ENCODE measurements at regions of chr20 and their contacts with region 1.

Region 1: DNA sequence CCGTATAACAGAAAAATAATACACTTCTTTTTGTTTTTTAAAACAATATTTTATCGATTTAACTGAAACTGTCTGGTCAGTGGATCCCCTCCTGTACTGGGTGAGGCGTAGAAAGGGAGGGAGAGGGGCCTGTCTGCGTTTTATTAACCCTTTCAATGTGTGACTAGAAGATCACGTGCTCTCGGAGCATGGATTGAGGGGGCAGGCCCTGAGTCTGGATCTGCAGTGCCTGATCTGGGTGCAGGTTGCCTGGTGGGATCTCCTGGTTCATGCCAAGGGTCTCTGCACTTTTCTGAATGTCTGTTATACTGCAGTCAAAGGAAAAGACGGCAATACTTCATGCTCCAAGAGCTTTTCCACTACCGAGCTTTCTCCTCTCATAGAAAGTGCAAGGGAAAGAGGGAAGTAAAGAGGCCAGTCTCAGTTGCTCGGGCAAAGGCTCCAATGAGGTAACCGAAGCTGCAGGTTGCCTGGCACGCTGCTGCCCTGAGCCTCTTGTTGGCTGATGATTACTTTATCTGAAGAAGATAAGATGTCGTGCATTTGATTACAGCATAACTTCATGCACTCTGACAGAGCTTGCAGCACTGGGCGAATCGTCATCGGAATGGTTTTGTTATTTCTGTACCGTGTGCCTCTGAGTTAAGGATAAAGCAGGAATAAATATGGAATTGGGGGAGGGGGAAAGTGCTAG is 167.5 kb upstream of the PMEPA1 start:
- DNase-seq: peak; percentile 3 to 53
- H3K4me3 ChIP-seq: no peak overlapping the region
- CTCF ChIP-seq: no peak
- POLR2A ChIP-seq: no peak

Region 2: DNA sequence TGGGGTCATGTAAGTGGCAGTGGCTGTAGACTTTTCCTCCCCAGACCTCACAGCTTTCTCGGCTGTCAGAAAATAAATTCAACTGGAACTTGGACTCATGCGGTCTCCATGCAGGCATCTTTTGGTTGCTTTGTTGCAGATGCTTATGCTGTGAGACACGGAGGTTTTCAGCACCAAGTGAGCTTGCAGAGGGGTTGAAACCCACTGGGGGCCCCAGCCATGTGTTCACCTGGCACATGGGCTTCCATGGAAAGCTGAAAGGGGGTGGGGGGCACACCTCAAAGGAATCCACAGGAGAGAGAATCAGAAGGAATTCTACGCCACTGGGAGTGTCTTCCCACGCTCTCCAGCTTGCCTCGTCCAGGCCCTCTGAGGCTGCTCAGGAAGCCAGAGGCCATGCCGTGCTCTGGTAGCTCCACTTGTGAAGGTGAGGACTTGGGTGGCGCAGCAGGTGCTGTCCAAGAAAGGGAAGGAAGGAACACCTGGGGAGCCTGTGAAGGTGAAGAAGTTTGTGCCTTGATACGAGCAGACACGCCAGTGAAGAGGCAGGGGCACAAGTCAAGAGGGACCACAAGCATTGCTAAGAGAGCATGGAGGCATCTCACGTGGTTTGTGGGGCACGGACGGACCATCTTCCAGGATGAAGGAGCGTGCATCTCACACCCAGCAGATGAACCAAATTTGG is 33.2 kb before region 1 on chr20:
- intact Hi-C with region 1: loop called (anchors 1 kb)
- DNase-seq: peak in 1 of 2 donors; percentile 67
- H3K4me3 ChIP-seq: no peak overlapping the region
- CTCF ChIP-seq: no peak
- POLR2A ChIP-seq: no peak